Heart left ventricle (tissue), 16 donors: ENCODE measurements at regions of chr17 and their contacts with region 1.

Region 1: GRCh38 chr17:43517615-43518386 is 28.3 kb downstream of the ETV4 start:
- DNase-seq: no peak
- ATAC-seq: peak; percentile 24 to 74 (median 65)
- H3K4me3 ChIP-seq: no peak overlapping the region
- H3K27ac ChIP-seq: peak overlapping the region in 9 of 12 donors; percentile 4 to 60 (median 37)
- H3K4me1 ChIP-seq: peaks cover 0 to 31% (median 20%) of the 10 kb centered on the region in 12 donors
- H3K27me3 ChIP-seq: no peaks in the 10 kb centered on the region
- CTCF ChIP-seq: no peak
- POLR2A ChIP-seq: no peak

Region 2: GRCh38 chr17:43556292-43556691 is 38.5 kb after region 1 on chr17:
- intact Hi-C with region 1: loop called in 4 of 10 experiments (anchors 5 kb)
- DNase-seq: no peak
- ATAC-seq: peak in 2 of 4 donors; percentile 49 to 81
- H3K4me3 ChIP-seq: no peak overlapping the region
- H3K27ac ChIP-seq: no peak overlapping the region
- H3K4me1 ChIP-seq: peaks cover 0 to 20% (median 2%) of the 10 kb centered on the region in 12 donors
- H3K27me3 ChIP-seq: peaks cover 0 to 6% (median 0%) of the 10 kb centered on the region in 9 donors
- CTCF ChIP-seq: no peak
- POLR2A ChIP-seq: no peak

Region 3: DNA sequence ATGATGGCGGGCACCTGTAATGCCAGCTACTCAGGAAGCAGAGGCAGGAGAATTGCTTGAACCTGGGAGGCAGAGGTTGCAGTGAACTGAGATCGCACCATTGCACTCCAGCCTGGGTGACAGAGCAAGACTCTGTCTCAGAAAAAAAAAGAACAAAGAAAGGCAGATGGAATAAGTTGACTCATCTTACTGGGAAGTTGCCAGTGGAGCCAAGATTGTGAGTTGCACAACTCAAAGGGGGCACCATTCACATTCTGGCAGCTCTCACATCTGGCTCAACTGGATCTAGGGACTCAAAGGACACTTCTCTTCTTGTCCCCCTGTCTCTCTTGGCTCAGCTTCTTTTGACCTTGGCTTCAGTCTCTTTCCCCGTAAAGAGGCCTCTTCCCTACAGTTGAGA is 82.0 kb after region 1 on chr17:
- intact Hi-C with region 1: no loop called
- DNase-seq: no peak
- ATAC-seq: peak in 1 of 4 donors; percentile 22
- H3K4me3 ChIP-seq: no peak overlapping the region
- H3K27ac ChIP-seq: no peak overlapping the region
- H3K4me1 ChIP-seq: peaks cover 0 to 23% (median 6%) of the 10 kb centered on the region in 12 donors
- H3K27me3 ChIP-seq: no peaks in the 10 kb centered on the region
- CTCF ChIP-seq: no peak
- POLR2A ChIP-seq: no peak

Region 4: GRCh38 chr17:43673516-43674323 is 155.9 kb after region 1 on chr17:
- intact Hi-C with region 1: loop called in 2 of 10 experiments (anchors 2 to 5 kb)
- DNase-seq: peak; percentile 60 to 78 (median 72)
- ATAC-seq: peak in 3 of 4 donors; percentile 61 to 72 (median 67)
- H3K4me3 ChIP-seq: no peak overlapping the region
- H3K27ac ChIP-seq: no peak overlapping the region
- H3K4me1 ChIP-seq: peaks cover 0 to 35% (median 12%) of the 10 kb centered on the region in 12 donors
- H3K27me3 ChIP-seq: no peaks in the 10 kb centered on the region
- CTCF ChIP-seq: peak; percentile 87 to 99 (median 96)
- POLR2A ChIP-seq: no peak